Prostate gland (tissue), 2 donors: ENCODE measurements at regions of chr5 and their contacts with region 1.

Region 1: GRCh38 chr5:79020861-79021561 is 35.9 kb upstream of the ARSB start:
- DNase-seq: peak; percentile 32
- H3K4me3 ChIP-seq: no peak overlapping the region
- H3K27ac ChIP-seq: no peak overlapping the region
- H3K4me1 ChIP-seq: no peaks in the 10 kb centered on the region
- H3K27me3 ChIP-seq: no peaks in the 10 kb centered on the region
- CTCF ChIP-seq: peak; percentile 29 to 70 (median 64)
- POLR2A ChIP-seq: no peak

Region 2: DNA sequence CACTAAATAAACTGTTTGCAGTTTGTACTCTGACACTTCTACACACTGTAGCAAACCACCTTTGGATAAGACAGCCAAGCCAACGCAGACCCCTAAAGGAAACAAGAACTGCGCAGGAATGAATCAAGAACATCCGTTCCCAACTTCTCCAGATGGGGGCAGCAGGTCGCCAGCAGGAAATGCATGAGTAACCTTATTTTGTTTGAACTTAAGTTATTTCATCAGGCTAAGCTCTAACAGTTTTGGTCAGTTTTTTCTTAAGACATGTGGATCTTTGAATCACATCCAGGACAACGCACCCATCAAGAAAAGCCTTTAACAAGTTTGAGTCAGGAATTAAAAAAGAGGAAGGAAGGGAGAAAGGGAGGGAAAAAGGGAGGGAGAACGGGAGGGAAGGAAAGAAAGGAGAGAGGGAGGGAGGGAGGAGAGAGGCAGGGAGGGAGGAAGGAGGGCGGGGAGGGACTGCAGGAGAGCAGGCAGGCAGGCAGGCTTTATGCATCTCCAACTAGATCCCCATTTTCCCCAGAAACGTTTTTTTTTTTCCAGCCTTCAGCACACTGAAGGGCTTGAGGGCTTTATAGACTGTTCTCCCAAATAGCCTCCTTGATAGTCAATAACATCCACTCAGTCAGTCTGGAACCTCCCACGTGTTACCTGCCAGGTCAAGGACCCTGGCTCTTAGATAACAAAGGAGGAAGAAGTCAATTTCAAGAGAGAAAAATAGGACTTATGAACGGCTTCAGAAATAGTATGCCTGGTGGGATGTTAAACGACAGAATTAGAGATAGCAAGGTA is 112.8 kb after region 1 on chr5:
- intact Hi-C with region 1: loop called (anchors 1 kb)
- DNase-seq: peak; percentile 49
- H3K4me3 ChIP-seq: peak overlapping the region in 1 of 2 donors; percentile 23
- H3K27ac ChIP-seq: peak overlapping the region; percentile 55
- H3K4me1 ChIP-seq: no peaks in the 10 kb centered on the region
- H3K27me3 ChIP-seq: no peaks in the 10 kb centered on the region
- CTCF ChIP-seq: peak; percentile 44 to 76 (median 68)
- POLR2A ChIP-seq: no peak

Region 3: DNA sequence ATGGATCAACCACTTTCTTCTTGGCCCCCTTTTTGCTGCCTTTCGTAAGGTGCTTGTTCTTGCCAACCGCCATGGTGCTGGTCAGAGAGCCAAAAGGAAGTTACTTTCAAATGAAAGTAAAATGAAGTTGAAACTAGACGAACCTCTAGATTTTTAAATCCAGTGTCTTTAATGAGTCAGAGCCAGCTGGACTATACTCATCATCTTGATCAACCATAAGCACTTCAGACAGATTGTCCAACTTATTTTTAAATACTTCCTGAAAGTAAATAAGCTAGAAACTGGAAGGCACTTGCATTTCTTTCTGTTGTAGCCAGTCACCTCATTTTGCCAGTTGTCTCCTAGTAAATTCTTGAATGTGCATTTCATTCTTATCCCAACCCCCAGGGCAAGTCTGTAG is 263.8 kb after region 1 on chr5:
- intact Hi-C with region 1: no loop called
- DNase-seq: no peak
- H3K4me3 ChIP-seq: no peak overlapping the region
- H3K27ac ChIP-seq: no peak overlapping the region
- H3K4me1 ChIP-seq: no peaks in the 10 kb centered on the region
- H3K27me3 ChIP-seq: no peaks in the 10 kb centered on the region
- CTCF ChIP-seq: no peak
- POLR2A ChIP-seq: no peak